ENCODE measurements at regions of chr10 and their contacts with region 1.

Region 1: GRCh38 chr10:130110246-130111112 is at the start of gene C10orf143:
- DNase-seq: peak; percentile 97
- ATAC-seq: peak; percentile 77
- H3K4me3 Mint-ChIP-seq: peak within 1 kb of the TSS; percentile 94
- H3K27ac Mint-ChIP-seq: peak within 1 kb of the TSS; percentile 98
- H3K4me1 Mint-ChIP-seq: peaks cover 29% of the 10 kb centered on the region
- H3K27me3 Mint-ChIP-seq: peaks cover 7% of the 10 kb centered on the region; the same call in 1 of the 2 replicates
- CTCF ChIP-seq: no peak
- total RNA-seq, gene C10orf143: 1.4 to 1.9 TPM (median 1.6 TPM) in 3 replicates

Region 2: GRCh38 chr10:129971381-129972144 is 138.9 kb before region 1 on chr10:
- CTCF ChIA-PET with region 1: interaction called, 31 read pairs
- POLR2A ChIA-PET with region 1: no interaction called
- DNase-seq: peak; percentile 69
- ATAC-seq: peak; percentile 38
- H3K4me3 Mint-ChIP-seq: peak overlapping the region; percentile 64
- H3K27ac Mint-ChIP-seq: no peak overlapping the region
- H3K4me1 Mint-ChIP-seq: peaks cover 35% of the 10 kb centered on the region
- H3K27me3 Mint-ChIP-seq: peaks cover 91% of the 10 kb centered on the region
- CTCF ChIP-seq: no peak

Region 3: GRCh38 chr10:130045091-130045652 is 65.3 kb before region 1 on chr10:
- CTCF ChIA-PET with region 1: interaction called, 16 read pairs
- POLR2A ChIA-PET with region 1: interaction called, 5 read pairs
- DNase-seq: peak; percentile 78
- ATAC-seq: peak; percentile 86
- H3K4me3 Mint-ChIP-seq: no peak overlapping the region
- H3K27ac Mint-ChIP-seq: no peak overlapping the region
- H3K4me1 Mint-ChIP-seq: peaks cover 22% of the 10 kb centered on the region
- H3K27me3 Mint-ChIP-seq: no peaks in the 10 kb centered on the region
- CTCF ChIP-seq: peak; percentile 39; the same call in 1 of the 2 replicates

Region 4: GRCh38 chr10:130079614-130080460 is 30.6 kb before region 1 on chr10:
- CTCF ChIA-PET with region 1: interaction called, 16 read pairs
- POLR2A ChIA-PET with region 1: no interaction called
- DNase-seq: no peak
- ATAC-seq: no peak
- H3K4me3 Mint-ChIP-seq: no peak overlapping the region
- H3K27ac Mint-ChIP-seq: no peak overlapping the region
- H3K4me1 Mint-ChIP-seq: peaks cover 8% of the 10 kb centered on the region
- H3K27me3 Mint-ChIP-seq: no peaks in the 10 kb centered on the region
- CTCF ChIP-seq: no peak

Region 5: GRCh38 chr10:130127364-130128061 is 17.0 kb after region 1 on chr10:
- CTCF ChIA-PET with region 1: interaction called, 64 read pairs
- POLR2A ChIA-PET with region 1: interaction called, 4 read pairs
- DNase-seq: peak; percentile 77
- ATAC-seq: peak; percentile 95
- H3K4me3 Mint-ChIP-seq: no peak overlapping the region
- H3K27ac Mint-ChIP-seq: no peak overlapping the region; the same call in 1 of the 2 replicates
- H3K4me1 Mint-ChIP-seq: peaks cover 16% of the 10 kb centered on the region
- H3K27me3 Mint-ChIP-seq: peaks cover 5% of the 10 kb centered on the region; the same call in 1 of the 2 replicates
- CTCF ChIP-seq: peak; percentile 27; the same call in 1 of the 2 replicates

Region 6: GRCh38 chr10:130136226-130137089 is 26.0 kb after region 1 on chr10 and contains the start of gene GLRX3:
- CTCF ChIA-PET with region 1: interaction called, 39 read pairs
- POLR2A ChIA-PET with region 1: interaction called, 48 read pairs
- DNase-seq: peak; percentile 93
- ATAC-seq: peak; percentile 88
- H3K4me3 Mint-ChIP-seq: peak within 1 kb of the TSS; percentile 85
- H3K27ac Mint-ChIP-seq: peak within 1 kb of the TSS; percentile 57; the same call in 1 of the 2 replicates
- H3K4me1 Mint-ChIP-seq: peaks cover 25% of the 10 kb centered on the region
- H3K27me3 Mint-ChIP-seq: peaks cover 6% of the 10 kb centered on the region
- CTCF ChIP-seq: no peak
- total RNA-seq, gene GLRX3: 132 to 142 TPM (median 133 TPM) in 3 replicates

Region 7: GRCh38 chr10:130179640-130180039 is 69.2 kb after region 1 on chr10:
- CTCF ChIA-PET with region 1: interaction called, 22 read pairs
- POLR2A ChIA-PET with region 1: no interaction called
- DNase-seq: peak; percentile 36
- ATAC-seq: peak; percentile 90
- H3K4me3 Mint-ChIP-seq: no peak overlapping the region
- H3K27ac Mint-ChIP-seq: no peak overlapping the region
- H3K4me1 Mint-ChIP-seq: no peaks in the 10 kb centered on the region
- H3K27me3 Mint-ChIP-seq: no peaks in the 10 kb centered on the region
- CTCF ChIP-seq: no peak

Region 8: DNA sequence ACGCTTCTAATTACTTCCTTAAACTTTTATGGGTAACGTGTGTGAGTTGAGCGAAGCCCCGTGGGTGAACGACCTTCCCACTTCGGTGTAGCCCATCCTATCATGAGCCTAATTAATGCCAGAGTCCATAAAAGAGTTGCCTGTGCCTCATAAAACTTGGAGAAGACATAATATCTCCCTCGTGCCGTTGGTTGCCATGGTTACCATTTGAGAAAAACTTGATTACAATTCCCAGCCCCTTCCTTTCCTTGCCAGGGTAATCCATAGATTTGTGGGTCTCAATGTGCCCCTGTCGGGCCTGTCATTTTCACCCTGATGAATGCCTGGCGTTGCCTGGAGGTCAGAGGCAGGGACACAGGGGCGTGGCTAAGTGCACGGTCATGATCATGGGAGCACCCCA is 152.8 kb after region 1 on chr10:
- CTCF ChIA-PET with region 1: no interaction called
- POLR2A ChIA-PET with region 1: no interaction called
- DNase-seq: no peak
- ATAC-seq: no peak
- H3K4me3 Mint-ChIP-seq: no peak overlapping the region
- H3K27ac Mint-ChIP-seq: no peak overlapping the region
- H3K4me1 Mint-ChIP-seq: no peaks in the 10 kb centered on the region
- H3K27me3 Mint-ChIP-seq: peaks cover 29% of the 10 kb centered on the region
- CTCF ChIP-seq: no peak